MCF 10A (cell line): ENCODE measurements at regions of chr7 and their contacts with region 1.

Region 1: GRCh38 chr7:87152107-87152844 is at the start of gene DMTF1:
- DNase-seq: peak; percentile 96
- H3K4me3 Mint-ChIP-seq: peak within 1 kb of the TSS; percentile 82
- H3K27ac Mint-ChIP-seq: peak within 1 kb of the TSS; percentile 98
- H3K4me1 Mint-ChIP-seq: peaks cover 18% of the 10 kb centered on the region
- H3K27me3 Mint-ChIP-seq: no peaks in the 10 kb centered on the region
- CTCF ChIP-seq: no peak
- total RNA-seq, gene DMTF1: 72.8 and 79.7 TPM in 2 replicates

Region 2: DNA sequence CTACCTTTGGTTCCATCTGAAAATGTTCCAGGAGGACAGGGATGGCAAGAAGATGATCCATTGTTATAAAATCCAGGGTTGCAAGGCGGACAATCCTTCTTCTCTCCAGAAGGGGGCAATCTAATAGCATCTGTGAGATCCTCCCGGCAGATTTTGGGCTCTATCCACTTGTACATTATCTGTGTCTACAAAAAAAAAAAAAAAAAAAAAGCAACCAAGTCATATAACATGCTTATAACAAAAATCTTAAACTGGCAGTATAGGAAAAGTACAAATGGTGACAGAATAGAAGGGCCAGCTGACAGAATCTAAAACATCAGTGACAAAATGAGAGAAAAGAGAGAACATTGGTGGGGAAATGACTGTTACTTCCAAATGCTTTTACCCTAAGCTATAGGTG is 225.5 kb before region 1 on chr7:
- CTCF ChIA-PET with region 1: interaction called, 129 read pairs
- POLR2A ChIA-PET with region 1: interaction called, 22 read pairs
- intact Hi-C with region 1: loop called (anchors 1 kb)
- DNase-seq: peak; percentile 66
- H3K4me3 Mint-ChIP-seq: no peak overlapping the region
- H3K27ac Mint-ChIP-seq: no peak overlapping the region
- H3K4me1 Mint-ChIP-seq: peaks cover 6% of the 10 kb centered on the region
- H3K27me3 Mint-ChIP-seq: no peaks in the 10 kb centered on the region
- CTCF ChIP-seq: peak; percentile 39

Region 3: GRCh38 chr7:86939197-86939814 is 213.0 kb before region 1 on chr7:
- CTCF ChIA-PET with region 1: interaction called, 86 read pairs
- POLR2A ChIA-PET with region 1: interaction called, 3 read pairs
- intact Hi-C with region 1: loop called (anchors 1 kb)
- DNase-seq: peak; percentile 81
- H3K4me3 Mint-ChIP-seq: no peak overlapping the region
- H3K27ac Mint-ChIP-seq: no peak overlapping the region
- H3K4me1 Mint-ChIP-seq: peaks cover 6% of the 10 kb centered on the region
- H3K27me3 Mint-ChIP-seq: no peaks in the 10 kb centered on the region
- CTCF ChIP-seq: peak; percentile 56

Region 4: GRCh38 chr7:87038993-87039716 is 113.1 kb before region 1 on chr7:
- CTCF ChIA-PET with region 1: interaction called, 5 read pairs
- POLR2A ChIA-PET with region 1: interaction called, 18 read pairs
- intact Hi-C with region 1: no loop called
- DNase-seq: peak; percentile 13
- H3K4me3 Mint-ChIP-seq: peak overlapping the region; percentile 81
- H3K27ac Mint-ChIP-seq: peak overlapping the region; percentile 94
- H3K4me1 Mint-ChIP-seq: peaks cover 12% of the 10 kb centered on the region
- H3K27me3 Mint-ChIP-seq: peaks cover 11% of the 10 kb centered on the region
- CTCF ChIP-seq: no peak

Region 5: DNA sequence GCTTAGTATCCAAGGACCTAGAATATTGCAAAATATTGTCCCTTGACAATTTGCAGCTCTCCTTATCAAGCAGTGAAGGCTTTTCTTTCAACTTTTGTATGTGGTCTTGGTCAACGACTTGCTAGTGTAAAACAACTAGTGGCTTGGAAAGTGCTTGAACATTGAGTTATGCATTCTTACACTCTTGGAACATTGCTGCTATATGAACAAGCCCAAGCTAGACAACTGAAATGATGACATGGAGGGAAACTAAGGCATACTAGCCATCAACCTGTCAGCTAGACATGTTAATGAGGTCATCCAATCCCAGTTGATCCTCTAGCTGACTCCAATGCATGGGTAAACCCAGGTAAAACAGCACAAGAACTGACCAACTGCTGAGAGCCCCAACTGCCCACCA is 12.8 kb before region 1 on chr7:
- CTCF ChIA-PET with region 1: interaction called, 21 read pairs
- POLR2A ChIA-PET with region 1: interaction called, 9 read pairs
- intact Hi-C with region 1: no loop called
- DNase-seq: no peak
- H3K4me3 Mint-ChIP-seq: no peak overlapping the region
- H3K27ac Mint-ChIP-seq: no peak overlapping the region
- H3K4me1 Mint-ChIP-seq: peaks cover 6% of the 10 kb centered on the region
- H3K27me3 Mint-ChIP-seq: peaks cover 19% of the 10 kb centered on the region
- CTCF ChIP-seq: no peak

Region 6: DNA sequence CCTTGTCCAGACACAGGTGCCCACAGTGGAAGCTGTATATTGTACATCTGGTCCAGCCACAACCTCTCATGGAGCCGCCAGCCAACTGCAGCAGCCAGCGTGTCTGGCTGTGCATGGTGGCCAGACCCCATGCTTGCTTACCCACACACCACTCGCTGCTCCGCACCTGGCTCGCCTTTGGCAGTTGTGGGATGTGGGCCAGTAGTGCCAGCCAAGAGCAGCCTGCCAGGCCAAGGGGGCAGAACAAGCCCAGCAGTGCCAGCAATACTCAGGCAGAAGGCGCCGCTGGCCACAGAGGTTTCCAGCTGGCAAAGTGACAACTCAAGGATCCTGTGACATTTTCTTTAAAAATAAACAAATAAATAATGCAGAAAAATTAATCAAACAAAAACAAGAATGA is 79.0 kb after region 1 on chr7:
- CTCF ChIA-PET with region 1: interaction called, 5 read pairs
- POLR2A ChIA-PET with region 1: interaction called, 5 read pairs
- intact Hi-C with region 1: loop called (anchors 5 kb)
- DNase-seq: no peak
- H3K4me3 Mint-ChIP-seq: no peak overlapping the region
- H3K27ac Mint-ChIP-seq: no peak overlapping the region
- H3K4me1 Mint-ChIP-seq: no peaks in the 10 kb centered on the region
- H3K27me3 Mint-ChIP-seq: peaks cover 12% of the 10 kb centered on the region
- CTCF ChIP-seq: no peak